Activated B cell treated with CpG ODN at 0.5 μM for 24 hours (primary cell): ENCODE measurements at regions of chr3 and their contacts with region 1.

Region 1: DNA sequence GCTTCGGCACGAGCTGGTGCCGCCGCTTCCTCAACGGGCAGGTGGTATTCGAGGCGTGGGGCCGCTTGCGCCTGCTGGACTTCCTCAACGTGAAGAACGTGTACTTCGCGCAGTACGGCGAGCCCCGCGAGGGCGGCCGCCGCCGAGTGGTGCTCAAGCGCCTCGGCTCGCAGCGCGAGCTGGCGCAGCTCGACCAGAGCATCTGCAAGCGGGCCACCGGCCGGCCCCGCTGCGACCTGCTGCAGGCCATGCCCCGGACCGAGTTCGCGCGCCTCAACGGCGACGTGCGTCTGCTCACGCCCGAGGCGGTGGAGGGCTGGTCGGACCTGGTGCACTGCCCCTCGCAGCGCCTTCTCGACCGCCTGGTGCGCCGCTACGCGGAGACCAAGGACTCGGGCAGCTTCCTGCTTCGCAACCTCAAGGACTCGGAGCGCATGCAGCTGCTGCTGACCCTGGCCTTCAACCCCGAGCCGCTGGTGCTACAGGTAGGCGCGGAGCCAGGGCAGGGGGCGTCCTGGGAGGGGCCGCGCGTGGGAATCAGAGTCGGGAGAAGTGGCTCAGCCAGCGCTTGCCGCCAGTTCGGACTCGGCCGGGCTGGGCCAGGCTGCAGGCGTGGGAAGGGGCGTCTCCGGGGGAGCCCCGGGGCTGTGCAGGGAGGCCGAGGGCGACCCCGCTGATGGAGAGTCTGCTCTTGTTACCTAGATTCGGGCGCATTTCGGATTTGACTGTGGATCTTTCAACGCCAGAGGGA is 1.1 kb downstream of the DIPK2A start:
- DNase-seq: peak; percentile 74
- ATAC-seq: peak; percentile 15
- H3K4me3 Mint-ChIP-seq: peak overlapping the region; percentile 99
- H3K27ac Mint-ChIP-seq: peak overlapping the region; percentile 99
- H3K4me1 Mint-ChIP-seq: peaks cover 48% of the 10 kb centered on the region
- H3K27me3 Mint-ChIP-seq: no peaks in the 10 kb centered on the region
- CTCF ChIP-seq: no peak

Region 2: GRCh38 chr3:142447852-142448823 is 1524.5 kb before region 1 on chr3 and contains the start of gene XRN1:
- CTCF ChIA-PET with region 1: no interaction called
- POLR2A ChIA-PET with region 1: no interaction called
- intact Hi-C with region 1: loop called (anchors 5 kb)
- DNase-seq: peak; percentile 96
- ATAC-seq: peak; percentile 97
- H3K4me3 Mint-ChIP-seq: peak within 1 kb of the TSS; percentile 97
- H3K27ac Mint-ChIP-seq: peak within 1 kb of the TSS; percentile 98
- H3K4me1 Mint-ChIP-seq: peaks cover 44% of the 10 kb centered on the region
- H3K27me3 Mint-ChIP-seq: no peaks in the 10 kb centered on the region
- CTCF ChIP-seq: no peak
- total RNA-seq, gene XRN1: 55.0 and 63.0 TPM in 2 replicates

Region 3: DNA sequence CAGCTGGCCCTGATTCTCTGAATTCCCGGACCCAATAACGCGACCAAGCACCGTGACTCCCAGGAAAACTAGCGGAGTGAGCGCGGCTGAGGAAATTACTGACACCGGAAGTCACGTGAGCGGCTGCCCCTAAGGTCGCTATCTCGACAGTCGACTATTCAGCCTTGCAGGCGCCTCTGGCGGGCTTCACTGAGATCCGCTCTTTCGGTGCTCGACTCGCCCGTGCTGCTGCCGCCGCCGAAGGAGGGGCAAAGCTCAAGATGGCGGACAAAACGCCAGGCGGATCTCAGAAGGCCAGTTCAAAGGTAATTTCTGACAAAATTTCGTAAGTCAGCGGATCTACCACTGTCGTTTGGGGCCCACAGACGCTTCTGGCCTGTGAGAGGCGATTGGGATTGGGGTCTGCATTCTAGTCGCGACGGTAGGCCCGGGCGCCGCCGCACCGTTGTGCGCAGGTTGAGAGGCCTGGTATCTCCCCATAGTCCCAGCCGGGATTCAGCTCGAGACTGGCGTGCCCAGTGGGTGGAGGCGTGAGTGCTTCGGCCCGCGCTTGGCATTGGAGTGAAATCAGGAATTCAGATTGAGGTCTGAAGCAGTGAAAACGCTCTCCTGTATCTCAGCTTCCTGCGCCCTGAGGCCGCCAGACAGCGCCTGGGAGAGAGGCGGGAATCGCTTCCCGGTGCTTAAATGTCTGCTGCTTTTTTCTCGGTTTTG is 971.2 kb before region 1 on chr3 and contains the start of gene U2SURP:
- CTCF ChIA-PET with region 1: no interaction called
- POLR2A ChIA-PET with region 1: interaction called, 20 read pairs
- intact Hi-C with region 1: loop called (anchors 1 kb)
- DNase-seq: peak; percentile 74
- ATAC-seq: peak; percentile 93
- H3K4me3 Mint-ChIP-seq: peak within 1 kb of the TSS; percentile 99
- H3K27ac Mint-ChIP-seq: peak within 1 kb of the TSS; percentile 98
- H3K4me1 Mint-ChIP-seq: peaks cover 41% of the 10 kb centered on the region
- H3K27me3 Mint-ChIP-seq: no peaks in the 10 kb centered on the region
- CTCF ChIP-seq: no peak
- total RNA-seq, gene U2SURP: 117 and 131 TPM in 2 replicates

Region 4: DNA sequence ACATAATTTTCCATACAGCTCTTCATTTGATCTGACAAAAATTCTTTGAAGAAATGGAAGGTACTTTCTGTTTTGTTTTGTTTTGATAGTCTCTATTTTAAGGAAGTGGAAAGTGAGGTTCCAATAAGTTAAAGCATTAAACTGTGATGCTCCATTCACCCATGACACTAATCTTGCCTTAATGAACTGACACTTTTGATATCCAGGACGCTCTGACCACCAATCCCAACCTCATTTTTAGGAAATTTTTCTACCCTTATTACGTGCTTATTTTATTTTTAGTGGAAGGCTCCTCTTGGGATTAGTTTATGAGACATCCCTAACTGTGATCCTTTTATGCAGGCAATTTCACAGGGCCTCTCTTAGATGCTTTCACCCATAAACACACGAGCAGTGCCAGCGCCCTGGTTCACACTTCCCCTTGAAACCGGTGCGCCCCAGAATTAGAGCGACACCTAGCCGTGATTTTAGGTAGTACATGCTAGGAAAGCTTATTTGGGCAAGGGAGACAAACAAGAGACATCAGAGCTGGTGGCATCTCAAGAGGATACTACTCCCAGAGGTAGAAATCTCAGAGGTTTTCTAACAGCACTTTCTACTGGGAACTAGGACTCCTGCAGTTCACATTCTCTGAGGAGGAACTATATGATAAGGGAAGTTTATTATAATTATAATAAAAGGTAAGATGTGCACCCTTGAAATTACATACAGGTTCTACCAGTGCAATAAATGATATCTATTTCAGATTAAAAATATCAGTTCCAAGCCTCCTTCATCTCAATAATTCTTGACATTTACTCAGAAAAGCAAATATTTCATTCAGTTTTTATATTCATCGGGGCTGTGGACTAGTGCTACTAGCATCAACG is 298.3 kb before region 1 on chr3:
- CTCF ChIA-PET with region 1: no interaction called
- POLR2A ChIA-PET with region 1: interaction called, 3 read pairs
- intact Hi-C with region 1: loop called (anchors 2 kb)
- DNase-seq: peak; percentile 47
- ATAC-seq: peak; percentile 93
- H3K4me3 Mint-ChIP-seq: peak overlapping the region; percentile 76
- H3K27ac Mint-ChIP-seq: peak overlapping the region; percentile 98
- H3K4me1 Mint-ChIP-seq: peaks cover 56% of the 10 kb centered on the region
- H3K27me3 Mint-ChIP-seq: no peaks in the 10 kb centered on the region
- CTCF ChIP-seq: peak; percentile 72

Region 5: DNA sequence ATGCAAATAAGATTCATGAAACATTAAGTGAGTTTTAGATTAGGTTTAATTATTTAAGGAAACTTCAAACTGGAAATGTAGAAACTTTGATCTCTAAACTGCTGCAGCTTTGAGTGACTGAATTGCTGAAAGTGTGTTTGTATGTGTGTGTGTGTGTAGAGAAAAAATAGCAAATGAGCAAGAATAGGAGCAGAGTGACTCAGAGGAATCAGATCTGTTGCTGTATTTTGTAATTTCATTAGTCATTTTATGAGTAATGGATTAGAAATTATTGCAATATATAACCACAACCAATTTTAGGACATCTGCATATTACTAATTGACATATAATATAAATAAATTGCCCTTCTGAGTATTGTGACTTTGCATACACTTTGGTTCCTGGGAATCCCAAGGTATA is 71.6 kb before region 1 on chr3:
- CTCF ChIA-PET with region 1: interaction called, 14 read pairs
- POLR2A ChIA-PET with region 1: interaction called, 10 read pairs
- intact Hi-C with region 1: loop called (anchors 1 kb)
- DNase-seq: no peak
- ATAC-seq: no peak
- H3K4me3 Mint-ChIP-seq: no peak overlapping the region
- H3K27ac Mint-ChIP-seq: no peak overlapping the region
- H3K4me1 Mint-ChIP-seq: peaks cover 8% of the 10 kb centered on the region
- H3K27me3 Mint-ChIP-seq: peaks cover 1% of the 10 kb centered on the region
- CTCF ChIP-seq: no peak

Region 6: GRCh38 chr3:144270100-144270499 is 297.4 kb after region 1 on chr3:
- CTCF ChIA-PET with region 1: no interaction called
- POLR2A ChIA-PET with region 1: no interaction called
- intact Hi-C with region 1: loop called (anchors 10 kb)
- DNase-seq: no peak
- ATAC-seq: no peak
- H3K4me3 Mint-ChIP-seq: no peak overlapping the region
- H3K27ac Mint-ChIP-seq: no peak overlapping the region
- H3K4me1 Mint-ChIP-seq: peaks cover 8% of the 10 kb centered on the region
- H3K27me3 Mint-ChIP-seq: peaks cover 2% of the 10 kb centered on the region
- CTCF ChIP-seq: no peak

Region 7: GRCh38 chr3:144756704-144757440 is 784.2 kb after region 1 on chr3:
- CTCF ChIA-PET with region 1: no interaction called
- POLR2A ChIA-PET with region 1: no interaction called
- intact Hi-C with region 1: no loop called
- DNase-seq: no peak
- ATAC-seq: no peak
- H3K4me3 Mint-ChIP-seq: no peak overlapping the region
- H3K27ac Mint-ChIP-seq: no peak overlapping the region
- H3K4me1 Mint-ChIP-seq: no peaks in the 10 kb centered on the region
- H3K27me3 Mint-ChIP-seq: no peaks in the 10 kb centered on the region
- CTCF ChIP-seq: no peak

Region 8: DNA sequence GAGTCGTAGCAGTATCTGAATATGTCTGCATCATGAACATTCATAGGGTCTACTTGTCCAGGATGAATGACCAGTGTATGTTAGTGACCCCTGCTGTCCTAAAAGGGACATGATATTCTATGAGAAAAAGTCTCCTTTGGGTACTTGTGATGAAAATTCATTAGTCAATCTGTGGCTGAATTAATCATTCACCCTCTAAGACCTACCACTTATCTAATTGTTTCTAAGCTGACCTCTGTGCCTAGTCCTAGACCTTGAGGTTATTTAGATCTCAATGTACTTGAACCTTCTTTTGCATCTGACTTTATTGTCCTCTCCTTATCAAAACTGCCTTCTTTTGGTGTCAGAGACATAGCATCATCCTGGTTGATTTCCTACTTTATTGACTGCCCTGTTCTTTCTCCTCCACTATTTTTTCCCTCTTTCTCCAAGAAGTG is 798.3 kb after region 1 on chr3:
- CTCF ChIA-PET with region 1: no interaction called
- POLR2A ChIA-PET with region 1: no interaction called
- intact Hi-C with region 1: loop called (anchors 2 kb)
- DNase-seq: no peak
- ATAC-seq: no peak
- H3K4me3 Mint-ChIP-seq: no peak overlapping the region
- H3K27ac Mint-ChIP-seq: no peak overlapping the region
- H3K4me1 Mint-ChIP-seq: no peaks in the 10 kb centered on the region
- H3K27me3 Mint-ChIP-seq: no peaks in the 10 kb centered on the region
- CTCF ChIP-seq: no peak